Activated CD4-positive, alpha-beta T cell treated with anti-CD3 and anti-CD28 coated beads, Interleukin-2, amount 10 ng/mL, durations not matched to agents 24 days and 14 days (primary cell): ENCODE measurements at regions of chr6 and their contacts with region 1.

Region 1: GRCh38 chr6:139124887-139125672 is 9.8 kb upstream of the HECA start:
- DNase-seq: peak; percentile 94
- H3K4me3 Mint-ChIP-seq: peak overlapping the region; percentile 73
- H3K27ac Mint-ChIP-seq: peak overlapping the region; percentile 98
- H3K4me1 Mint-ChIP-seq: peaks cover 41% of the 10 kb centered on the region
- H3K27me3 Mint-ChIP-seq: no peaks in the 10 kb centered on the region

Region 2: DNA sequence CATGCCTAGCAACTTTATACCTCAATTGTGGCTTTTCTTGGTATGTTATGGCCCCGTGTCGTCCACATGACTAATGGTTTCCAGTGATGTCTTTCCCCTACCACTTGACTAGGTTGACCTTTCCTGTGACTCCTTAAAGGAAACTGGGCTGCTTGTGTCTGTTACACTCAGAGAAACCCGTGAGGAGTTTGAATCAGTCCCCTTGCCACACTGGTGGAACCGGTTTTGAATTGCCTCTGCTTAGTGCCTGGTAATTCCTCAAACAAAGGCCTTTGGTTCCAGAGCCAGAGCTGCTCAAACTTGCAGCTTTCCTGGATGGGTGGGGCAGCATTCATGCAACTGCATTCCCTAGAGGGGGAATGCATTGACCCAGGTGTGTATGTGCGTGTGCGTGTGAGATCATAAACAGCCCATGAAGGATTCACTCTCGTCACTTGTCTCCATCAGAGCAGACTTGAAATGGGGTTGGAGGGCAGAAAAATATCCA is 307.2 kb before region 1 on chr6:
- intact Hi-C with region 1: loop called (anchors 5 kb)
- DNase-seq: no peak
- H3K4me3 Mint-ChIP-seq: peak overlapping the region; percentile 45
- H3K27ac Mint-ChIP-seq: peak overlapping the region; percentile 79
- H3K4me1 Mint-ChIP-seq: peaks cover 29% of the 10 kb centered on the region
- H3K27me3 Mint-ChIP-seq: peaks cover 2% of the 10 kb centered on the region

Region 3: DNA sequence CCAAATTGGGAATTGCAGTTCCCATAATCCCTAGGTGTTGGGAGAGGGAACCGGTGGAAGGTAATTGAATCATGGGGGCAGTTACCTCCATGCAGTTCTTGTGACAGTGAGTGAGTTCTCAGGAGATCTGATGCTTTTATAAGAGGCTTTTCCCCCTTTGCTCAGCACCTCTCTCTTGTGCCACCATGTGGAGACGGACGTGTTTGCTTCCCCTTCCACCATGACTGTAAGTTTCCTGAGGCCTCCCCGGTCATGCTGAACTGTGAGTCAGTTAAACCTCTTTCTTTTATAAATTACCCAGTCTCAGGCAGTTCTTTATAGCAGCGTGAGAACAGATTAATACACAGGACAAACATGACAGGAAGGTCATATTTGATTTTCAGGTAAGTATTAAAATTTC is 15.5 kb before region 1 on chr6:
- intact Hi-C with region 1: loop called (anchors 1 kb)
- DNase-seq: peak; percentile 69
- H3K4me3 Mint-ChIP-seq: no peak overlapping the region
- H3K27ac Mint-ChIP-seq: no peak overlapping the region
- H3K4me1 Mint-ChIP-seq: peaks cover 26% of the 10 kb centered on the region
- H3K27me3 Mint-ChIP-seq: no peaks in the 10 kb centered on the region

Region 4: GRCh38 chr6:139173172-139173571 is 48.1 kb after region 1 on chr6:
- intact Hi-C with region 1: loop called (anchors 1 kb)
- DNase-seq: peak; percentile 61
- H3K4me3 Mint-ChIP-seq: peak overlapping the region; percentile 32
- H3K27ac Mint-ChIP-seq: peak overlapping the region; percentile 79
- H3K4me1 Mint-ChIP-seq: peaks cover 78% of the 10 kb centered on the region
- H3K27me3 Mint-ChIP-seq: no peaks in the 10 kb centered on the region

Region 5: GRCh38 chr6:139323511-139324300 is 198.6 kb after region 1 on chr6:
- intact Hi-C with region 1: loop called (anchors 1 kb)
- DNase-seq: peak; percentile 92
- H3K4me3 Mint-ChIP-seq: peak overlapping the region; percentile 83
- H3K27ac Mint-ChIP-seq: peak overlapping the region; percentile 99
- H3K4me1 Mint-ChIP-seq: peaks cover 21% of the 10 kb centered on the region
- H3K27me3 Mint-ChIP-seq: no peaks in the 10 kb centered on the region